PC-9 (cell line): ENCODE measurements at regions of chr10 and their contacts with region 1.

Region 1: GRCh38 chr10:18659120-18659818 is at the start of gene ARL5B:
- DNase-seq: peak; percentile 86 to 91
- H3K4me3 ChIP-seq: peak within 1 kb of the TSS; percentile 89
- H3K27ac ChIP-seq: peak within 1 kb of the TSS; percentile 91
- H3K4me1 ChIP-seq: peaks cover 15% of the 10 kb centered on the region
- H3K27me3 ChIP-seq: no peaks in the 10 kb centered on the region
- CTCF ChIP-seq: no peak
- total RNA-seq, gene ARL5B: 11.1 and 15.3 TPM in 2 replicates

Region 2: DNA sequence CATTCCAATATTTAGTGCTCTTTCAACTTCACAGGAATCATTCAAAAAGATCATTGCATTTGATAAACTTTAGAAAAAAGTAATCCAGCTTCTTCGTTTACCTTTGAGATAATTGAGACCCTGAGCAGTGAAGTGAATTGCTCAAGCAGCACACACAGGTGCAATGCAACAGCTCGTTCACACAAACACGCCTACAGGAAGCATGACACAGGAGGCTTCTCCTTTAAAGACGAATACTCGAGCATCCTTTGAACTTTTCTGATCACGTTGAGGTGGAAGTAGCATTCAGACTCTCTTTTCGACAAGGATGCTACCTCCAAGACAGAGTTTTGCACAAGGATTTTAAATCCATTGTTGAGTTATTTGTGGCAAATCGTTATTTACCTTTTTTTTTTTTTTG is 1824.0 kb before region 1 on chr10:
- CTCF ChIA-PET with region 1: no interaction called
- POLR2A ChIA-PET with region 1: interaction called, 19 read pairs
- intact Hi-C with region 1: no loop called
- DNase-seq: no peak
- H3K4me3 ChIP-seq: no peak overlapping the region
- H3K27ac ChIP-seq: no peak overlapping the region
- H3K4me1 ChIP-seq: no peaks in the 10 kb centered on the region
- H3K27me3 ChIP-seq: no peaks in the 10 kb centered on the region
- CTCF ChIP-seq: no peak

Region 3: DNA sequence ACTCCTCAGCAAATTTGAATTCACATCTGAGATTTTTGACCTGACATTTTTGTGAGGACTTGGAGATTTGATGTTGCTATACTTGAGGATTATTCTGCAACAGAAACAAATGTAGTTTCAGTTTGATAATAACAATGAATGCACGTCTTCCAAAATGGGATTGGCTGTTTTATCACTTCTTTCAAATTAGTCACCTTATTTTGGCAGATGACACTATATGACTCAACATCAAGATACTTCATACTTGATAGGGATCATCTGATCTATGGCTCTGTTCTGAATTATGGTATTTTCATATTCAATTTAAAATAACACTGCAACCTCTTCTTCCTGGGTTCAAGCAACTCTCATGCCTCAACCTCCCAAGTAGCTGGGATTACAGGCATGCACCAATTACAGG is 24.2 kb after region 1 on chr10:
- CTCF ChIA-PET with region 1: no interaction called
- POLR2A ChIA-PET with region 1: interaction called, 10 read pairs
- intact Hi-C with region 1: no loop called
- DNase-seq: no peak
- H3K4me3 ChIP-seq: no peak overlapping the region
- H3K27ac ChIP-seq: no peak overlapping the region
- H3K4me1 ChIP-seq: no peaks in the 10 kb centered on the region
- H3K27me3 ChIP-seq: no peaks in the 10 kb centered on the region
- CTCF ChIP-seq: no peak